ENCODE measurements at regions of chr12 and their contacts with region 1.

Region 1: GRCh38 chr12:6470375-6471163 is at the start of gene VAMP1:
- DNase-seq: peak; percentile 96
- H3K4me3 Mint-ChIP-seq: peak within 1 kb of the TSS; percentile 72
- H3K27ac Mint-ChIP-seq: peak within 1 kb of the TSS; percentile 87
- H3K4me1 Mint-ChIP-seq: peaks cover 13% of the 10 kb centered on the region
- H3K27me3 Mint-ChIP-seq: no peaks in the 10 kb centered on the region
- CTCF ChIP-seq: no peak
- total RNA-seq, gene VAMP1: 2.5 and 2.9 TPM in 2 replicates

Region 2: DNA sequence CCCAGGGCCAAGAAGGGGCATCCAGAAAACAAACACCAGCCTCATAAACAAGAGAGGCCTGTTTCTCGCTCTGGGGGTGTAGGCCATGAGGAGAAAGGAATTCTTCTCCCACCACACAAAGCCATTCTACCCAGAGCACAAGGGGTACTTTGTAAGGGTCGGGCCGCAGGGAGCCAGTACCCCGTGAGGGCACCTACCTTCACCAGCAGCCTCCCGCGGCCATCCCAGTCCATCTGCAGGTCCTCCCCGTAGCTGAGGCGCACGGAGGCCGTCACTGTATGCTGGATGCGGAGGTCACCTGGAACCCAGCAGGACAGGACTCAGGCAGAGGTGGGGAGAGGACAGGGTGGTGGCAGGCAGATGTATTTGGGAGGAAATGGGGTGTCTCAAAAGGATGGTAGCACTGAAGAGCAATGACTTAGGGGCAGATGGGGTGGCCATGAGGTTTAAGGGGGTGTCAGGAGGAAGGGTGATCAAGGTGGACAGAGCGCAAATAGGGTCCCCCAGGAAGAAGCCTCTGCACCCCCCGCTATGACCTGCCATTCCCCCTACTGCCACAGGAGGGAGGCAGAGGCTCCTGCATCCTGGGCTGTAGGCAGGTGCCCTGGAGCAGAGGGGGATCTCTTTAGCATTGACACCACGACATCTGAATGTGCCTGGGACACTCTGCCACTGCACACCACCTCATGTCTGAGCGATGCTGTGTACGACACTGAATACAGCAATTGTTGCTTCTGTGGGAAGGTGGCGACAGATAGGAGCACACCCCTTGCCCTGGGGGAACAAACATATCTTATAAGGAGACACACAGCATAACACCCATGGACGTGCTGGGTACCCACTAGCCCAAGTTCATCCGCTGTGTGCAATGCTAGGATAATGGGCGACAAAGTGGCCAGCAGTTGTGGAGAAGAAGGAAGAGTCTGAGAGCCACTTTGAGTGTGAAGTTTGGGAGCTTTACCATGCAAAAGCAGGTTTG is 407.5 kb before region 1 on chr12:
- CTCF ChIA-PET with region 1: interaction called, 3 read pairs
- POLR2A ChIA-PET with region 1: no interaction called
- intact Hi-C with region 1: loop called (anchors 10 kb)
- DNase-seq: peak; percentile 55
- H3K4me3 Mint-ChIP-seq: no peak overlapping the region
- H3K27ac Mint-ChIP-seq: no peak overlapping the region
- H3K4me1 Mint-ChIP-seq: no peaks in the 10 kb centered on the region
- H3K27me3 Mint-ChIP-seq: no peaks in the 10 kb centered on the region
- CTCF ChIP-seq: peak; percentile 98

Region 3: DNA sequence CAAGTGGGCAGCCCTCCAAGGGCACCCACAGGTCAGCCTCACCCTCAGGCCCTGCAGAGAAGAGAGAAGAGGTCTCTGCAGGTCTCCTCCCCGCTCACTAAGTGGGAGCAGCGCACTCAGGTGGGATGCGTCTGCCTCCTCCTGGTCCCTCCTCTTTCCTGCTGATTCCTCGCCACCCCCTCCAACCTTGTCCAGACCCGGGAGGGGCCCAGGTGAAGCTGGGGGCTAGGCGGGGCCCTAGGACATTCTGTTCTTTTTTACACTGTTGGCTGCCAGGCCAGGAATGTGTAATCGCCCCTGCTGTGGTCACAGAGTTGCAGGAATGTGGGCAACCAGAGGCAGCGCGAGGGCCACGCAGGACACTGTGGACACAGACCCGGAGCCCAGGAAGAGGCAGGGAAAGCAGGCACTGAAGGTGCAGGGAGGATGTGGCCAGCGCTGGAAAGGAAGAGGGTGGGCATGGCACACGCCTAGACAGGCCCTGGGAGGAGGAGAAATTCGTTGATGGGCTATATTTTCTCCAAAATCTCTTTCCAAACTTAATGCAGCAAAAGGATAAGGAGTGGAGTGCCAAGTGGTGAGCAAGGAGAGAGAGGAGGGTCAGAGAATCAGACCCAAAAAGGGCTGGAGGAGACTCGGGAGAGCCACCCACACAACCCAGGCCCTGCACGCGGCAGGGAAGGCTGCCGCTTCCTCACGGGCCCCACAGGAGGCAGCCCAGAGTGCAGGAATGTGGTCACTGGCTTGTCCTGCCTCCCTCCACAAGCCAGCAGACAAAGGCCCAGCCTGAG is 94.3 kb before region 1 on chr12:
- CTCF ChIA-PET with region 1: interaction called, 5 read pairs
- POLR2A ChIA-PET with region 1: interaction called, 28 read pairs
- intact Hi-C with region 1: no loop called
- DNase-seq: peak; percentile 97
- H3K4me3 Mint-ChIP-seq: peak overlapping the region; percentile 89
- H3K27ac Mint-ChIP-seq: peak overlapping the region; percentile 97
- H3K4me1 Mint-ChIP-seq: peaks cover 56% of the 10 kb centered on the region
- H3K27me3 Mint-ChIP-seq: no peaks in the 10 kb centered on the region
- CTCF ChIP-seq: no peak

Region 4: GRCh38 chr12:6423267-6424007 is 47.1 kb before region 1 on chr12:
- CTCF ChIA-PET with region 1: interaction called, 59 read pairs
- POLR2A ChIA-PET with region 1: interaction called, 14 read pairs
- intact Hi-C with region 1: loop called (anchors 1 kb)
- DNase-seq: peak; percentile 96
- H3K4me3 Mint-ChIP-seq: no peak overlapping the region
- H3K27ac Mint-ChIP-seq: no peak overlapping the region
- H3K4me1 Mint-ChIP-seq: peaks cover 5% of the 10 kb centered on the region
- H3K27me3 Mint-ChIP-seq: no peaks in the 10 kb centered on the region
- CTCF ChIP-seq: peak; percentile 88

Region 5: GRCh38 chr12:6451348-6452244 is 19.0 kb before region 1 on chr12 and contains the start of gene TAPBPL:
- CTCF ChIA-PET with region 1: interaction called, 33 read pairs
- POLR2A ChIA-PET with region 1: interaction called, 50 read pairs
- intact Hi-C with region 1: no loop called
- DNase-seq: peak; percentile 72
- H3K4me3 Mint-ChIP-seq: peak within 1 kb of the TSS; percentile 94
- H3K27ac Mint-ChIP-seq: peak within 1 kb of the TSS; percentile 98
- H3K4me1 Mint-ChIP-seq: peaks cover 37% of the 10 kb centered on the region
- H3K27me3 Mint-ChIP-seq: no peaks in the 10 kb centered on the region
- CTCF ChIP-seq: no peak
- total RNA-seq, gene TAPBPL: 8.1 and 9.3 TPM in 2 replicates

Region 6: DNA sequence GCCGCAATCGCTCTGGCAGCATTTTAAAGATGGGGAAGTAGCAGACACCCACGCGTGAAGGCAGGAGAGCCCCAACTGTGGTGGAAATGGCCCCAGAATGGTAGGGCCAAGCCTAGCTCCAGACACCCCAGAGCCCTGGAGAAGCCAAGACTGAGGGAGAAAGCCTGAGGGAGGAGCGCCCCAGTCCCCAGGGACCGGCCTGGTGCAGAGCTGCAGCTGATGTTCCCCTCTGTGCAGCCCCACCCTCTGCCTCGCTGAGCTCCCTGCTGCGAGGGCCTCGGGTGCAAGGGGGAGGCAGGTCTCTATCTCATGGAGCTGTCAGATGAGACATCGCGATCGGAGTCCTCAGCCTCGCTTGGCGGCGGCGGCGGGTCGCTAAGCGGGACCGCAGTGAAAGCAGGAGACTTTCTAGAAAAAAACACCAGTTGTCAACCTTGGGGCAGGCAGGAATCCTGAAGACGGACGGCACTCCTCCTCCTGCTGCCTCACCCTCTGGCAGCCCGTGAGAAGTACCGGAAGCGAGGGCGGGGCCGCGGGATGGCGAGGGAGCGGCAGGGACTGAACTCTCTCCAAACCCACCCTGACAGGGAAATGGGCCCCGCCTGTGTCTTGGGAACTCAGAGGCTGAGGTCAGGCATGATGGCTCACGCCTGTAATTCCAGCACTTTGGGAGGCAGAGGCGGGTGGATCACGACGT is 69.8 kb after region 1 on chr12:
- CTCF ChIA-PET with region 1: interaction called, 47 read pairs
- POLR2A ChIA-PET with region 1: interaction called, 54 read pairs
- intact Hi-C with region 1: loop called (anchors 2 kb)
- DNase-seq: peak; percentile 97
- H3K4me3 Mint-ChIP-seq: peak overlapping the region; percentile 63
- H3K27ac Mint-ChIP-seq: peak overlapping the region; percentile 90
- H3K4me1 Mint-ChIP-seq: peaks cover 32% of the 10 kb centered on the region
- H3K27me3 Mint-ChIP-seq: no peaks in the 10 kb centered on the region
- CTCF ChIP-seq: no peak